Activated CD4-positive, alpha-beta memory T cell treated with anti-CD3 and anti-CD28 coated beads, Interleukin-2, amount 10 ng/mL, durations not matched to agents 7 days and 5 days (primary cell): ENCODE measurements at regions of chr19 and their contacts with region 1.

Region 1: GRCh38 chr19:33771384-33772101 is 25.1 kb upstream of the KCTD15 start:
- DNase-seq: peak; percentile 72
- H3K4me3 Mint-ChIP-seq: no peak overlapping the region
- H3K27ac Mint-ChIP-seq: no peak overlapping the region
- H3K4me1 Mint-ChIP-seq: no peaks in the 10 kb centered on the region
- H3K27me3 Mint-ChIP-seq: no peaks in the 10 kb centered on the region

Region 2: GRCh38 chr19:33416307-33417215 is 355.0 kb before region 1 on chr19:
- CTCF ChIA-PET with region 1: interaction called, 12 read pairs
- POLR2A ChIA-PET with region 1: no interaction called
- DNase-seq: peak; percentile 70
- H3K4me3 Mint-ChIP-seq: no peak overlapping the region
- H3K27ac Mint-ChIP-seq: no peak overlapping the region
- H3K4me1 Mint-ChIP-seq: peaks cover 1% of the 10 kb centered on the region
- H3K27me3 Mint-ChIP-seq: no peaks in the 10 kb centered on the region

Region 3: GRCh38 chr19:33430674-33431277 is 340.8 kb before region 1 on chr19:
- CTCF ChIA-PET with region 1: interaction called, 22 read pairs
- POLR2A ChIA-PET with region 1: no interaction called
- DNase-seq: peak; percentile 70
- H3K4me3 Mint-ChIP-seq: no peak overlapping the region
- H3K27ac Mint-ChIP-seq: no peak overlapping the region
- H3K4me1 Mint-ChIP-seq: peaks cover 7% of the 10 kb centered on the region
- H3K27me3 Mint-ChIP-seq: peaks cover 2% of the 10 kb centered on the region